A673 (cell line): ENCODE measurements at regions of chr17 and their contacts with region 1.

Region 1: GRCh38 chr17:16255481-16255921 is 38.5 kb downstream of the PIGL start:
- DNase-seq: no peak
- H3K4me3 ChIP-seq: no peak overlapping the region
- H3K27ac ChIP-seq: no peak overlapping the region
- H3K4me1 ChIP-seq: peaks cover 5% of the 10 kb centered on the region
- H3K27me3 ChIP-seq: no peaks in the 10 kb centered on the region
- CTCF ChIP-seq: no peak

Region 2: DNA sequence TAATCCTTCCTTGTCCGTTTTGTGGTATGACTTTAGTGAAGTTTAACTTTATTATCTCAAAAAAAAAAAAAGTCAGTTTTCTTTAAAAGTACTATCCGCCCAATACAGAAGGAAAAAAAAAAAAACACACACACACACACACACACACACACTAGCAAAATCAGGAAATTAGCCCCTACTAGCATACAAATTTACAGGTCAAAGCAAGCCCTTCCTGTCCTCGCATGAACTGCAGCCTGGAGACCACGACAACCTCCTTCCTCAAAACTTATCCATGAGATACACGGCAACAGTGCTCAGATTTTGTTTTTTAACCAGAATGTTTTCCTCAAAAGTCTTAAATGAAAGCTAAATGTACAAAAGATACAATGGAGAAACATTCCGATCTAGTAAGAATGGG is 56.4 kb before region 1 on chr17:
- CTCF ChIA-PET with region 1: no interaction called
- POLR2A ChIA-PET with region 1: no interaction called
- intact Hi-C with region 1: no loop called
- DNase-seq: no peak
- H3K4me3 ChIP-seq: no peak overlapping the region
- H3K27ac ChIP-seq: no peak overlapping the region
- H3K4me1 ChIP-seq: peaks cover 21% of the 10 kb centered on the region
- H3K27me3 ChIP-seq: no peaks in the 10 kb centered on the region
- CTCF ChIP-seq: no peak

Region 3: DNA sequence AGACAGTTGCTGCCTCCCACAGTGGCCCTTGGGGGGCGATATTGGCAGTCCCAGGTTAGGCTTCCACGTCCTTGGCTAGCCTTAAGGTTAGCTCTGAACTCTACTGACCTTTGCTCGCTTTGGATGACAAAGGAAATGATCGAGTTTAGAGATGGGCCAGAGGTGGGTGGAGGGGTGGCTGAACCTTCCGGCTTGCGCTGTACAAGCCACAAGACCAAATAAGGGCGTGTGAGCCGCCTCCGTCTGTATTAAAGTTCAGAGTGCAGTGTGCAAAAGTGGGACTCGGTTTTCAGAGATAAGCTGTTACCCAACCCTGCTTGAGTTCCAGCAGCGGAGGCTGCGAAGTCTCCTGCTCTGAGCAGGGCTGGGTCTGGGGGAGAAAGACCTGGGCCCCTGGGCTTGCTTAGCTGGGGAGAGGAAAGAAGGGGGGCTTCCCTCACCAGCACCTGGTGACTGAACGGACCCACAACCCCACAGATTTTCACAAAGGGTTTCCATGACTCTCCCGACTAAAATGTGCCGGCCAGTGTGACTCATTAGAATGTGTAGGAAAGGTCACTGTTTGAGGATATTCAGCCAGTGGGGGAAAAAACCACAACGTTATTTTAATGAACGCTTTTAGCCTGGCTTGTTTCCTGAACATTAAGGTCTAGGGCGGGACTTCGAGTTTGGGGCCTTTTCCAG is 30.6 kb after region 1 on chr17:
- CTCF ChIA-PET with region 1: no interaction called
- POLR2A ChIA-PET with region 1: interaction called, 12 read pairs
- intact Hi-C with region 1: no loop called
- DNase-seq: peak; percentile 56
- H3K4me3 ChIP-seq: no peak overlapping the region
- H3K27ac ChIP-seq: peak overlapping the region; percentile 39
- H3K4me1 ChIP-seq: peaks cover 12% of the 10 kb centered on the region
- H3K27me3 ChIP-seq: no peaks in the 10 kb centered on the region
- CTCF ChIP-seq: peak; percentile 55